ENCODE measurements at regions of chr15 and their contacts with region 1.

Region 1: GRCh38 chr15:82985688-82986441 is at the start of gene RAMAC:
- H3K4me3 Mint-ChIP-seq: peak within 1 kb of the TSS; percentile 94
- H3K27ac Mint-ChIP-seq: peak within 1 kb of the TSS; percentile 95
- H3K4me1 Mint-ChIP-seq: peaks cover 20% of the 10 kb centered on the region
- H3K27me3 Mint-ChIP-seq: no peaks in the 10 kb centered on the region

Region 2: GRCh38 chr15:82809404-82810060 is 176.3 kb before region 1 on chr15 and contains the start of gene WHAMM:
- intact Hi-C with region 1: loop called (anchors 5 kb)
- H3K4me3 Mint-ChIP-seq: peak within 1 kb of the TSS; percentile 89
- H3K27ac Mint-ChIP-seq: peak within 1 kb of the TSS; percentile 93
- H3K4me1 Mint-ChIP-seq: peaks cover 26% of the 10 kb centered on the region
- H3K27me3 Mint-ChIP-seq: no peaks in the 10 kb centered on the region

Region 3: DNA sequence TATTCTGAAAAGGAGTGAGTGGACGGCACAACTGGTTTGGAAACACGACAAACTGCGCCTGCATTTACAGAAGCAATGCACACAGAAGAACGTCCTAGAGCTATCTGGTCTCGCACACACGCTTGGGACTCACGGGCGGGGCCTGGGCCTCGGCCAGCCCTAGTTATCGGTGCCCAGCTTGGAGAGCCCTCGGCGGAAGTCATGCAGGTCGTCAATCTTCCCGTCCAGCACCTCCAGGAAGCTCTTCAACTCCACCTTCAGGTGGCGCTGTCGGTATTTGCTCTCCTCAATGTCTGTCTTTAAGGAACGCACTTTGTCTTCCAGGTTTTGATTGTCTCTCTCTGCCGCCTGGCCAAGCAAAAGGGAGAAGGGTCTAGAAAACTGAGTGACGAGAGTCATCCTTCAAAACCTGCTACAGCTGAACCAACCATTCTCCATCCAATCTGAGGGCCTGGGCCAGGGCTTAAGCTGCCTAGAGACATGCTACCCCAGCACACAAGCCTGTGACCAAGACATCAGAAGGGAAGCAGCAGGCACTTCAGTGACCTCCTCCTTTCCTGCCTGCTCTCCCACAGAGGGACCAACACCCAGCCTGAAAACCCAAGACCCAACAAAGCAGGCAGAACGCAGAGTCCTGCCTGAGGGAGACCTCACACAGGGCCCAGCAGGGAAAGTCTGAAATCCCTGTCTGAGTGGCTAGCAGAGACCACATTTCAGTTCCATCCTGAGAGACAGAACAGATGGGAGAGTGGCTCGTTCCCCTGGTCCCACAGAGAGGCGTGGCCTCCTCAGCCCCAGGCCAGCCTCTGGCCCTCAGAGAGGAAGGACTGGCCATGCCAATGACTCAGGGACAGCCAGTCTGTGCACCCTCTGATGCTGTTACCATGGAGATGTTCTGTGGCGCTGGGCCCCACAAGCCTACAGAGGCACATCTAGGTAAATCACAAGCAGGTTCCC is 136.0 kb before region 1 on chr15:
- intact Hi-C with region 1: loop called (anchors 5 kb)
- H3K4me3 Mint-ChIP-seq: no peak overlapping the region
- H3K27ac Mint-ChIP-seq: peak overlapping the region; percentile 52
- H3K4me1 Mint-ChIP-seq: peaks cover 65% of the 10 kb centered on the region
- H3K27me3 Mint-ChIP-seq: no peaks in the 10 kb centered on the region

Region 4: GRCh38 chr15:82871358-82871757 is 114.5 kb before region 1 on chr15:
- intact Hi-C with region 1: loop called (anchors 5 kb)
- H3K4me3 Mint-ChIP-seq: no peak overlapping the region
- H3K27ac Mint-ChIP-seq: peak overlapping the region; percentile 72
- H3K4me1 Mint-ChIP-seq: peaks cover 39% of the 10 kb centered on the region
- H3K27me3 Mint-ChIP-seq: no peaks in the 10 kb centered on the region

Region 5: GRCh38 chr15:82952158-82953081 is 33.4 kb before region 1 on chr15 and contains the start of gene HOMER2:
- intact Hi-C with region 1: loop called (anchors 5 kb)
- H3K4me3 Mint-ChIP-seq: peak within 1 kb of the TSS; percentile 66
- H3K27ac Mint-ChIP-seq: peak within 1 kb of the TSS; percentile 57
- H3K4me1 Mint-ChIP-seq: peaks cover 6% of the 10 kb centered on the region
- H3K27me3 Mint-ChIP-seq: peaks cover 11% of the 10 kb centered on the region